Naive thymus-derived CD4-positive, alpha-beta T cell (primary cell): ENCODE measurements at regions of chr10 and their contacts with region 1.

Region 1: GRCh38 chr10:91797874-91798648 is at the start of gene TNKS2:
- DNase-seq: peak; percentile 86 to 97 (median 92)
- ATAC-seq: peak; percentile 87
- H3K4me3 ChIP-seq: peak within 1 kb of the TSS; percentile 87
- H3K4me3 Mint-ChIP-seq: peak within 1 kb of the TSS; percentile 95 to 100 (median 98)
- H3K27ac ChIP-seq: peak within 1 kb of the TSS; percentile 92
- H3K27ac Mint-ChIP-seq: peak within 1 kb of the TSS; percentile 92 to 100 (median 96)
- H3K4me1 ChIP-seq: peaks cover 26 to 37% of the 10 kb centered on the region in 2 donors
- H3K4me1 Mint-ChIP-seq: peaks cover 37 to 73% (median 69%) of the 10 kb centered on the region in 7 donors
- H3K27me3 ChIP-seq: no peaks in the 10 kb centered on the region
- H3K27me3 Mint-ChIP-seq: no peaks in the 10 kb centered on the region
- total RNA-seq, gene TNKS2: 35.0 to 57.3 (median 41.5) TPM

Region 2: GRCh38 chr10:91220194-91220953 is 577.7 kb before region 1 on chr10 and contains the start of gene PCGF5:
- CTCF ChIA-PET with region 1: no interaction called
- POLR2A ChIA-PET with region 1: no interaction called
- intact Hi-C with region 1: loop called (anchors 5 to 10 kb)
- DNase-seq: peak; percentile 82 to 98 (median 90)
- ATAC-seq: peak; percentile 98
- H3K4me3 ChIP-seq: peak within 1 kb of the TSS; percentile 68
- H3K4me3 Mint-ChIP-seq: peak within 1 kb of the TSS; percentile 84 to 96 (median 90)
- H3K27ac ChIP-seq: peak within 1 kb of the TSS; percentile 90
- H3K27ac Mint-ChIP-seq: peak within 1 kb of the TSS; percentile 76 to 95 (median 89)
- H3K4me1 ChIP-seq: peaks cover 28 to 34% of the 10 kb centered on the region in 2 donors
- H3K4me1 Mint-ChIP-seq: peaks cover 33 to 69% (median 55%) of the 10 kb centered on the region in 7 donors
- H3K27me3 ChIP-seq: no peaks in the 10 kb centered on the region
- H3K27me3 Mint-ChIP-seq: no peaks in the 10 kb centered on the region
- total RNA-seq, gene PCGF5: 41.2 to 62.3 (median 57.4) TPM

Region 3: DNA sequence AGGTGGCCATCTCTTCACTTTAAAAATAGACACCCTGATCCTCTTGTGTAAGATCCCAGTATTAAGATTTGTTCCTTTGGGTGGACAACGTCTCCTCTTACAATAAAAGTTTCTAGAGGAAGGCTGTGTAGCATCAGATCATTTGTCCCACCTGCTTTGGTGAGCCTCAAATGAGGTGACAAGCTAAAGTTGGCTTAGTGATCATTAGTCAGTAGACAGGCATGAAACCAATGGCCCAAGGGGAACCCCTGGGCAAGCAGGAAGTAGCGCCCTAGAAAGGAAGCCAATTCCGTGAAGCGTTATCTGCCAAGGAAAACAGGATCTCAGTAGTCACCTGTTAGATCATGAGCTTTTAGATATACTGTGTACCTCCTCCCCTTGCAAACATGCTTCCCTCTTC is 510.8 kb before region 1 on chr10:
- CTCF ChIA-PET with region 1: no interaction called
- POLR2A ChIA-PET with region 1: no interaction called
- intact Hi-C with region 1: no loop called
- DNase-seq: no peak
- ATAC-seq: no peak
- H3K4me3 ChIP-seq: no peak overlapping the region
- H3K4me3 Mint-ChIP-seq: no peak overlapping the region
- H3K27ac ChIP-seq: no peak overlapping the region
- H3K27ac Mint-ChIP-seq: no peak overlapping the region
- H3K4me1 ChIP-seq: no peaks in the 10 kb centered on the region
- H3K4me1 Mint-ChIP-seq: peaks cover 0 to 3% (median 0%) of the 10 kb centered on the region in 7 donors
- H3K27me3 ChIP-seq: no peaks in the 10 kb centered on the region
- H3K27me3 Mint-ChIP-seq: peaks cover 0 to 7% (median 0%) of the 10 kb centered on the region in 5 donors

Region 4: DNA sequence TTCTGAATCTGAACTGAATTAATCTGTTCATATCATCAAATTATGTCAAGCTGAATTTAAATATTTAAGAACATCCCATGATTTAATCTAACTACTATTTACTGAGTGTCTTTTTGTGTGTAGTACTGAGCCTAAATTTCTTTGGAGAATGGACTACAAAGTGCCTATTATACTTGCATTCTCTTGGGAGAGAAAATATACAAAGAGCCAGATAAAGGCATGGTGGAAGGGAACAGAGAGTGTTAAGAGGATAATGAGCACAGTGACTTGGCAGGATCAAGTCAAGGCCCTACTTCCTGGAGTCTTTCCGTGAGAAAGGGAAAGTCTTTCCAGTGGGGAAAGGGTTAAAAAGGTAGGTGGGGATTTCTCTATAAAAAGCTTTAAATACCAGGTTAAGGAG is 15.2 kb after region 1 on chr10:
- CTCF ChIA-PET with region 1: interaction called, 4 read pairs
- POLR2A ChIA-PET with region 1: interaction called, 25 read pairs
- intact Hi-C with region 1: loop called in 1 of 2 experiments (anchors 2 kb)
- DNase-seq: no peak
- ATAC-seq: no peak
- H3K4me3 ChIP-seq: no peak overlapping the region
- H3K4me3 Mint-ChIP-seq: peak overlapping the region in 1 of 10 donors; percentile 29
- H3K27ac ChIP-seq: no peak overlapping the region
- H3K27ac Mint-ChIP-seq: no peak overlapping the region
- H3K4me1 ChIP-seq: peaks cover 0 to 7% of the 10 kb centered on the region in 2 donors
- H3K4me1 Mint-ChIP-seq: peaks cover 20 to 52% (median 46%) of the 10 kb centered on the region in 7 donors
- H3K27me3 ChIP-seq: no peaks in the 10 kb centered on the region
- H3K27me3 Mint-ChIP-seq: no peaks in the 10 kb centered on the region

Region 5: DNA sequence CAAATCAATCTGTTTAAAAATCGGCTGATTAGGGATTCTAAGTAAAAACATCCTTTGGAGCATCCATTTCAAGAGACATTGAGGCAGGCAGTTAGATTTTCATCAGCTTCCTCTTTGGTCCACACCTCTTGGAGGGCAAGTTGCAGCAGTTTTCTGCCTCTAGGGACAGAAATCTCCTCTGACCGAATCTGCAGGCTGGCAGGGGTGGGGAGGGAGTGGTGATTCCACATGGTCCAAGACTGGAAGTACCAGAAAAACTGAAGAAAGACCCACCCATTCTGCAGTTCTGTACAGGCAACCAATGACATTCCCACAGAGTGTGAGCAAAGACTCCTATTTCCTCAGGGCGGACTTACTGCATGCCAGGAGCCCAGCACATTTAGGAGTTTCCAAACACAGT is 82.3 kb after region 1 on chr10:
- CTCF ChIA-PET with region 1: no interaction called
- POLR2A ChIA-PET with region 1: no interaction called
- intact Hi-C with region 1: no loop called
- DNase-seq: no peak
- ATAC-seq: no peak
- H3K4me3 ChIP-seq: no peak overlapping the region
- H3K4me3 Mint-ChIP-seq: no peak overlapping the region
- H3K27ac ChIP-seq: no peak overlapping the region
- H3K27ac Mint-ChIP-seq: no peak overlapping the region
- H3K4me1 ChIP-seq: no peaks in the 10 kb centered on the region
- H3K4me1 Mint-ChIP-seq: no peaks in the 10 kb centered on the region
- H3K27me3 ChIP-seq: no peaks in the 10 kb centered on the region
- H3K27me3 Mint-ChIP-seq: peaks cover 0 to 23% (median 0%) of the 10 kb centered on the region in 5 donors

Region 6: GRCh38 chr10:91923371-91924211 is 125.5 kb after region 1 on chr10 and contains the start of gene BTAF1:
- CTCF ChIA-PET with region 1: no interaction called
- POLR2A ChIA-PET with region 1: interaction called, 13 read pairs
- intact Hi-C with region 1: loop called (anchors 1 kb)
- DNase-seq: peak; percentile 86 to 93 (median 91)
- ATAC-seq: peak; percentile 97
- H3K4me3 ChIP-seq: peak within 1 kb of the TSS; percentile 70
- H3K4me3 Mint-ChIP-seq: peak within 1 kb of the TSS; percentile 91 to 100 (median 96)
- H3K27ac ChIP-seq: peak within 1 kb of the TSS; percentile 96
- H3K27ac Mint-ChIP-seq: peak within 1 kb of the TSS; percentile 97 to 99 (median 98)
- H3K4me1 ChIP-seq: peaks cover 9 to 25% of the 10 kb centered on the region in 2 donors
- H3K4me1 Mint-ChIP-seq: peaks cover 22 to 62% (median 45%) of the 10 kb centered on the region in 7 donors
- H3K27me3 ChIP-seq: no peaks in the 10 kb centered on the region
- H3K27me3 Mint-ChIP-seq: peaks cover under 1 to 8% (median 5%) of the 10 kb centered on the region in 5 donors
- total RNA-seq, gene BTAF1: 55.7 to 84.8 (median 78.5) TPM

Region 7: GRCh38 chr10:92592761-92593618 is 794.9 kb after region 1 on chr10 and contains the start of gene KIF11:
- CTCF ChIA-PET with region 1: no interaction called
- POLR2A ChIA-PET with region 1: interaction called, 7 read pairs
- intact Hi-C with region 1: loop called (anchors 2 kb)
- DNase-seq: peak; percentile 89 to 95 (median 94)
- ATAC-seq: peak; percentile 89
- H3K4me3 ChIP-seq: peak within 1 kb of the TSS; percentile 83
- H3K4me3 Mint-ChIP-seq: peak within 1 kb of the TSS; percentile 95 to 100 (median 99)
- H3K27ac ChIP-seq: peak within 1 kb of the TSS; percentile 96
- H3K27ac Mint-ChIP-seq: peak within 1 kb of the TSS; percentile 96 to 100 (median 100)
- H3K4me1 ChIP-seq: peaks cover 12 to 28% of the 10 kb centered on the region in 2 donors
- H3K4me1 Mint-ChIP-seq: peaks cover 9 to 54% (median 28%) of the 10 kb centered on the region in 7 donors
- H3K27me3 ChIP-seq: no peaks in the 10 kb centered on the region
- H3K27me3 Mint-ChIP-seq: peaks cover 0 to 5% (median 0%) of the 10 kb centered on the region in 5 donors
- total RNA-seq, gene KIF11: 0.32 to 52.6 (median 0.75) TPM

Region 8: DNA sequence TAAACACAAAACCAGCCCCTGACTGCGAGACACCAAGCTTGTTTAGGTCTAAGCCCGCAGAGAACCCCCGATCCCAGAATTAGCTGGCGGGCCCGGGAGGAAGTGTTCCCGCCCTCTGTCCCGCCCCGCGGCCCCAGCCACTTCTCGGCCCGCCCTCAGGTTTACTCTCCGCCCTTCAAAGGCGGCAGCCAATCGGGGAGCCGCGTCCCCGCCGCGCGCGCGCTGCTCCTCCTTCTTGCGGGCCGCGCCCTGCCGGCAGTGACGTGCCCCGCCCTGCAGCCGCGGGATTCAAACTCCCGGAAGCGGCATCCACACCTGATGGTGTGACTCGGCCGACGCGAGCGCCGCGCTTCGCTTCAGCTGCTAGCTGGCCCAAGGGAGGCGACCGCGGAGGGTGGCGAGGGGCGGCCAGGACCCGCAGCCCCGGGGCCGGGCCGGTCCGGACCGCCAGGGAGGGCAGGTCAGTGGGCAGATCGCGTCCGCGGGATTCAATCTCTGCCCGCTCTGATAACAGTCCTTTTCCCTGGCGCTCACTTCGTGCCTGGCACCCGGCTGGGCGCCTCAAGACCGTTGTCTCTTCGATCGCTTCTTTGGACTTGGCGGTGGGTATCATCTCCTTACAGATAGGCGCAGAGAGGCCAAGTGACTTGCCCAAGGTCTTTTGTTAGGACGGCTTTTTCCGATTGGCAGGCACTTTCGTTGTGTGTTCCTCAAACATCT is 1698.4 kb after region 1 on chr10 and contains the start of gene CEP55:
- CTCF ChIA-PET with region 1: no interaction called
- POLR2A ChIA-PET with region 1: no interaction called
- intact Hi-C with region 1: loop called (anchors 5 to 10 kb)
- DNase-seq: peak; percentile 90 to 97 (median 94)
- ATAC-seq: peak; percentile 100
- H3K4me3 ChIP-seq: peak within 1 kb of the TSS; percentile 100
- H3K4me3 Mint-ChIP-seq: peak within 1 kb of the TSS; percentile 84 to 95 (median 92)
- H3K27ac ChIP-seq: no peak within 1 kb of the TSS
- H3K27ac Mint-ChIP-seq: peak within 1 kb of the TSS in 8 of 9 donors; percentile 13 to 90 (median 72)
- H3K4me1 ChIP-seq: peaks cover 7 to 11% of the 10 kb centered on the region in 2 donors
- H3K4me1 Mint-ChIP-seq: peaks cover 0 to 48% (median 12%) of the 10 kb centered on the region in 7 donors
- H3K27me3 ChIP-seq: no peaks in the 10 kb centered on the region
- H3K27me3 Mint-ChIP-seq: peaks cover 0 to 9% (median 7%) of the 10 kb centered on the region in 5 donors
- total RNA-seq, gene CEP55: 0.54 to 48.6 TPM in 2 of 5 experiments, not detected in the others